Common myeloid progenitor, CD34-positive (primary cell): ENCODE measurements at regions of chr12 and their contacts with region 1.

Region 1: GRCh38 chr12:47686645-47687240 is 19.1 kb downstream of the RPAP3 start:
- DNase-seq: peak; percentile 49 to 76 (median 71)
- H3K4me3 ChIP-seq: no peak overlapping the region
- H3K27ac ChIP-seq: no peak overlapping the region
- H3K4me1 ChIP-seq: no peaks in the 10 kb centered on the region
- H3K27me3 ChIP-seq: no peaks in the 10 kb centered on the region

Region 2: DNA sequence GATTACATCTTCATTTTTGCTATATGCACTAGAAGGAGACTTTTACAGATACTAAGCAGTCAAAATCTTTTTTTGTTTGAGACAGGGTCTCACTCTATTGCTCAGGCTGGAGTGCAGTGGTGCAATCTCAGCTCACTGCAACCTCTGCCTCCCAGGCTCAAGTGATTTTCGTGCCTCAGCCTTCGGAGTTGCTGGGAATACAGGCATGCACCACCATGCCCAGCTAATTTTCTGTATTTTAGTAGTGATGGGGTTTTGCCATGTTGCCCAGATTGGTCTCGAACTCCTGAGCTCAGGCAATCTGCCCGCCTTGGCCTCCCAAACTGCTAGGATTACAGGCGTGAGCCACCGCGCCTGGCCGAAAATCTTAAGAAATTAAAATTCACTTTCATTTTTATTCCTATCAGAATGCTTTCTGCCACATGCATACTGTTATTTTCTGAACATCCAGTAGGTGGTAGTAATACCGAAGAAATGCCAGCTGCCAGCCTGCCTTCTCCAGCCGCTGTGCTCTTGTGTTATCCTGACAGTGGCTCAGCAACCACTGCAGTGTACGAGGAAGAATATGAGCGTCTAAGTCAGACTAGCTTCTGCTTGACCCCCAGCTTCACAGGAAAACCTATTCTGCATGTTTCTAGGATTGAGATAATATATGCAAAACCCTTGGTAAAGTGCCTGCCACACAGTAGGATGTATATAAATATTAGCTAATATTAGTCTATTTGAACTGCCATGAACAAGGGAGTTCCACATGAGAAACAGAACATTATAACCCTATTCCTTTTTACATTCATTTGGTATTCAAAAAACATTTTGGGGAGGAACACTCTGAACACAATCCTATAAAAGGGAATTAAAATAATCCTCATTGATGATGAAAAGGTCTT is 35.1 kb before region 1 on chr12:
- CTCF ChIA-PET with region 1: interaction called, 81 read pairs
- POLR2A ChIA-PET with region 1: no interaction called
- DNase-seq: peak; percentile 70 to 81 (median 80)
- H3K4me3 ChIP-seq: peak overlapping the region in 3 of 7 experiments; percentile 21 to 59 (median 59)
- H3K27ac ChIP-seq: no peak overlapping the region
- H3K4me1 ChIP-seq: peaks cover 8 to 19% (median 12%) of the 10 kb centered on the region in 4 experiments
- H3K27me3 ChIP-seq: no peaks in the 10 kb centered on the region

Region 3: GRCh38 chr12:47725893-47726292 is 39.1 kb after region 1 on chr12:
- CTCF ChIA-PET with region 1: no interaction called
- POLR2A ChIA-PET with region 1: no interaction called
- DNase-seq: no peak
- H3K4me3 ChIP-seq: no peak overlapping the region
- H3K27ac ChIP-seq: no peak overlapping the region
- H3K4me1 ChIP-seq: peaks cover 0 to 12% (median 8%) of the 10 kb centered on the region in 4 experiments
- H3K27me3 ChIP-seq: peaks cover 0 to under 1% (median 0%) of the 10 kb centered on the region in 5 experiments